CD8-positive, alpha-beta memory T cell (primary cell): ENCODE measurements at regions of chr11 and their contacts with region 1.

Region 1: GRCh38 chr11:88016392-88017170 is 158.7 kb downstream of the RAB38 start:
- DNase-seq: peak; percentile 28 to 61 (median 40)
- H3K4me3 ChIP-seq: no peak overlapping the region
- H3K4me3 Mint-ChIP-seq: no peak overlapping the region
- H3K27ac ChIP-seq: no peak overlapping the region
- H3K27ac Mint-ChIP-seq: no peak overlapping the region
- H3K4me1 ChIP-seq: no peaks in the 10 kb centered on the region
- H3K4me1 Mint-ChIP-seq: no peaks in the 10 kb centered on the region
- H3K27me3 ChIP-seq: no peaks in the 10 kb centered on the region
- H3K27me3 Mint-ChIP-seq: peaks cover 0 to 1% of the 10 kb centered on the region in 2 donors

Region 2: DNA sequence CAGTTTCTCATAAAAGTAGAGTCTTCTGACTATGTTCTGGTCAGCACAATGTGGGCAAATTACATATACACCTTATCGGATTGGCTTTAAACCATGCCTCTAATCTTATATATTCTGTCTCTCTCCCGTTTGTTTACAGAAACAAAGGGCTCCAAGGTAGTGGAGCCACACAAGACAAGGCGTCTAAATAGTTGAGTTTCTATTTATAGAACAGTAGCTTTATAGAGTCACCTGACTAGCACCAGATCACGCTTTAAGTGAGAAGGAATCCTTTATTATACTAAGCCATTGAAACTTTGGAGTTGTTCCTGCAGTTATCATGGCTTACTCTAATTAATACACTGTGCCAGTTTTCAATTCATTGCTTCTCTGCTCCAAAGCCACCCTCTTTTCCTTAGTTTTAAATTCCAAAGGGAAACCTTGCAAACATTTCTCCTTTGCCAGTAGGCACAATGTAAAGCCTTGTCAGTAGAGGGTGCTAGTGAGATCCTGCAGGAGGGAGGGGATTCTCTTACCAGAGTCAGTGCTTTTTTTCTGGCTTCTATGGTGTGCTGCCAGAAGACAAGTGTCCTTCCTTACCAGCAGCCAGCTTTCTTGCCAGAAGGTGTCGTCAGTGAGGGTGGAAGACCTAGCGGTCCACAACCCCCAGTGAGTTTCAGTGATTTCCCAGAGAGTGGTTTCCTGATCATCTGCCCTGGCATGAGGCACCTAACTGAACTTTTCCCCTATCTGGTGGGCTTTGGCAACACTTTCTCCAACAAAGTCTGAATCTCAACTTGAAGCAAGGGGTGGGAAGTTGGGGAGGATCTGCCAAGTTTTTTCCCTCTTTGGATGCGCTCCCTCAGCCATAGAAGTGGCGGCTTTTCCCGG is 87.0 kb after region 1 on chr11:
- CTCF ChIA-PET with region 1: no interaction called
- POLR2A ChIA-PET with region 1: no interaction called
- DNase-seq: peak in 4 of 5 donors; percentile 1 to 47 (median 28)
- H3K4me3 ChIP-seq: no peak overlapping the region
- H3K4me3 Mint-ChIP-seq: no peak overlapping the region
- H3K27ac ChIP-seq: no peak overlapping the region
- H3K27ac Mint-ChIP-seq: no peak overlapping the region
- H3K4me1 ChIP-seq: no peaks in the 10 kb centered on the region
- H3K4me1 Mint-ChIP-seq: no peaks in the 10 kb centered on the region
- H3K27me3 ChIP-seq: no peaks in the 10 kb centered on the region
- H3K27me3 Mint-ChIP-seq: peaks cover 1 to 18% of the 10 kb centered on the region in 2 donors

Region 3: DNA sequence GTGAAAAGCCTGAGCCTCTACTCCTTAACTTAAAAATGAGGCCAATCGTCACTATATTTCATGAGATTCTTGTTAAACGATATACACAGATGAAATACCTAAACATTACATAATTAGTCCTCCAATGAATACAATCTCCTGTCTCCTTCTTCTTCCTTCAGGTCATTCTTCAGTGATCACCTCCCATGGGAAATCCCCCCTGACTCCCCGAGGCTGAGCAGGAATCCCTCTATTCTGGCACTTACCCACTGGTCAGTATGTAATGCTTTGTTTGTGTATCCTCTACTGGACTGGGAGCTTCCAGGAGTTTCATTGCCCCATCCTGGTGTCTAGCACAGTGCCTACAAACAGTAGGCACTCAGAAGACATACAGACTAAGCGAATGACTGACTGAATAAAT is 106.4 kb after region 1 on chr11:
- CTCF ChIA-PET with region 1: no interaction called
- POLR2A ChIA-PET with region 1: no interaction called
- DNase-seq: no peak
- H3K4me3 ChIP-seq: no peak overlapping the region
- H3K4me3 Mint-ChIP-seq: no peak overlapping the region
- H3K27ac ChIP-seq: no peak overlapping the region
- H3K27ac Mint-ChIP-seq: no peak overlapping the region
- H3K4me1 ChIP-seq: no peaks in the 10 kb centered on the region
- H3K4me1 Mint-ChIP-seq: no peaks in the 10 kb centered on the region
- H3K27me3 ChIP-seq: no peaks in the 10 kb centered on the region
- H3K27me3 Mint-ChIP-seq: peaks cover 1 to 3% of the 10 kb centered on the region in 2 donors

Region 4: DNA sequence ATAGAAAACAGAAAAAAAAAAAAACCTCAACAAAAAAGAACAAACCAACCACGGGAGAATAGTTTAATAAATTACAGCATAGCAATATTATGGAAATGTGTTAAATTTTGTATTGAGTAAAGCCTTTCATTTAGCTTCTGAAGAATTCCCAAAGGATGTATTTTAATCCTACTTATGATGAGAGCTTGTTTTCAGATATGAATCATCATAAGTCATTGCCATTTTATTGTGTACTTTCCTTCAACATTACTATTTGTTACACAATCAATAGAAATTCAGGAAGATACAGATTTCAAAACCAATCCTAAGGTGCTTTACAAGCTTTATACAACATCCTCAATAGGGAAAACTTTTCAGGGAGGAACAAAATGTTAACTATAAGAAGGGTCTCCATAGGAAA is 521.5 kb after region 1 on chr11:
- CTCF ChIA-PET with region 1: interaction called, 21 read pairs
- POLR2A ChIA-PET with region 1: no interaction called
- DNase-seq: no peak
- H3K4me3 ChIP-seq: no peak overlapping the region
- H3K4me3 Mint-ChIP-seq: no peak overlapping the region
- H3K27ac ChIP-seq: no peak overlapping the region
- H3K27ac Mint-ChIP-seq: no peak overlapping the region
- H3K4me1 ChIP-seq: no peaks in the 10 kb centered on the region
- H3K4me1 Mint-ChIP-seq: no peaks in the 10 kb centered on the region
- H3K27me3 ChIP-seq: no peaks in the 10 kb centered on the region
- H3K27me3 Mint-ChIP-seq: peaks cover 0 to 2% of the 10 kb centered on the region in 2 donors

Region 5: DNA sequence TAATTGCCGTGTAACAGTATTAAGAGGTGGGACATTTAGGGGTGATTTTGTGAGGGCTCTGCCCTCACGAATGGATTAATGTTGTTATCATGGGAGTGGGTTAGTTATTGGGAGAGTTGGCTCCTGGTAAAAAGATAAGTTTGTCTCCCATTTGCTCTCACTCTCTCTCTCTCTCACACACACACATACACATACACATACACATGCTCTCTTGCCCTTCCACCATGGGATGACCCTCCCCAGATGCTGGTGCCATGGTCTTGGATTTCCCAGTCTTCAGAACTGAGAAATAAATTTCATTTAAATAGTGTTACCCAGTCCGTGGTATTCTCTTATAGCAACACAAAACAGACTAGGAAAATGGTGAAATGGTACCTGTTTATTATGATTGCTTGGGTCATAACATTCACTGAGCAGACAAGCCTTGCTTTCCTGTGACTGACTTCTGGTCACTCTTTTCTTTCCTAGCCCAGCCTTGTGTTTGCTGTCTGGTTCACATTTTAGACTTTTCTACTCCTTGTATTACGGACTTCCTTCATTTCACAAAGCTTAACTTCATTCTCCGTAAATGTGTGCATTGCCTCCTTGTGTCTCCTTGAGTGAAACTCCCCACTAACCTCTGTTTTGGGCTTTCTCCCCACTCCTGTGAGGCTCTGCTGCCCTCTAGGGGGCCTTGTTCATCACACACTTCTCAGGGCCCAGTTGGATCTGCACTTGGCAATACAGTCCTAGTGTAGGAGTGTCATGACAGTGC is 527.5 kb after region 1 on chr11:
- CTCF ChIA-PET with region 1: interaction called, 21 read pairs
- POLR2A ChIA-PET with region 1: no interaction called
- DNase-seq: peak; percentile 56 to 80 (median 67)
- H3K4me3 ChIP-seq: no peak overlapping the region
- H3K4me3 Mint-ChIP-seq: peak overlapping the region in 4 of 7 donors; percentile 2 to 24 (median 10)
- H3K27ac ChIP-seq: no peak overlapping the region
- H3K27ac Mint-ChIP-seq: peak overlapping the region in 3 of 8 donors; percentile 1 to 81 (median 35)
- H3K4me1 ChIP-seq: peaks cover 4% of the 10 kb centered on the region
- H3K4me1 Mint-ChIP-seq: peaks cover 2 to 6% (median 4%) of the 10 kb centered on the region in 3 donors
- H3K27me3 ChIP-seq: no peaks in the 10 kb centered on the region
- H3K27me3 Mint-ChIP-seq: peaks cover 4 to 9% of the 10 kb centered on the region in 2 donors

Region 6: DNA sequence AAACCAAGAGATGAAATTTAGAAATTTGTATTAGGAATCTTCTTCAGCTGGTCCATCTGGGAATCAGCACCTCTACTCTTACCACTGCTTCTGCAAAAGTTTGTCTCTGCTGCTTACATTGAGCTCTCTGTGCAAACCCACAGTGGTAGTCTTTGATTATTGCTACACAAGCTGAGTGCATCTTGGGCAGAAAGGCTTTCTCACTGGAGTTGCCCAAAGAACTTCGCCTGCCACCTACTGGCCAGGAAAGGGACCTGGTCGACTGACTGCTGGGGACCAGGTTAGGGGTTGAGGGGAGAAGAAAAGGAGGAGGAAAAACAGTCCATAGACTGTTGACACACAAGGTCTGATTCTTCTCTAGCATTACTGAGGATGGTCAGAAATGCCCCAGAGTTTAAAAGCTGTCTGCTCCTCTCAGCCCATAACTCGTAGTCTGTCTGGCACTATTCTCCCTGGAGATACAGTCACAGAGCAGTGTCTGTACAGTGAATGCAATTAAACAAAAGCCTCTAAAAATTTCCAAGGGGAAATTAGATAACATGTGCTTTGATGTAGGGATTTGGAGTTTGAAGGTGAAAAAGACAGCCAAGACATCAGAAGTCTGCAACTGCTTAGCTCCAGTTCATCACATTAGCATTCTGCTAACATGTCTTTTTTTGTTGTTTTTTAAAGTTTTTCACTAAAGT is 535.9 kb after region 1 on chr11:
- CTCF ChIA-PET with region 1: interaction called, 18 read pairs
- POLR2A ChIA-PET with region 1: no interaction called
- DNase-seq: peak; percentile 4 to 57 (median 28)
- H3K4me3 ChIP-seq: no peak overlapping the region
- H3K4me3 Mint-ChIP-seq: no peak overlapping the region
- H3K27ac ChIP-seq: no peak overlapping the region
- H3K27ac Mint-ChIP-seq: peak overlapping the region in 1 of 8 donors; percentile 39
- H3K4me1 ChIP-seq: no peaks in the 10 kb centered on the region
- H3K4me1 Mint-ChIP-seq: no peaks in the 10 kb centered on the region
- H3K27me3 ChIP-seq: no peaks in the 10 kb centered on the region
- H3K27me3 Mint-ChIP-seq: peaks cover 9 to 27% of the 10 kb centered on the region in 2 donors